Activated T-helper 1 cell treated with anti-CD3 and anti-CD28 coated beads, Interleukin-12 subunit alpha, Interleukin-12 subunit beta, Interleukin-2, Interleukin-4 antibody, amounts not matched to agents 30 ng/mL and 10 ng/mL and 1 ng/mL, durations not matched to agents 14 hours and 24 hours and 36 hours (primary cell): ENCODE measurements at regions of chr3 and their contacts with region 1.

Region 1: DNA sequence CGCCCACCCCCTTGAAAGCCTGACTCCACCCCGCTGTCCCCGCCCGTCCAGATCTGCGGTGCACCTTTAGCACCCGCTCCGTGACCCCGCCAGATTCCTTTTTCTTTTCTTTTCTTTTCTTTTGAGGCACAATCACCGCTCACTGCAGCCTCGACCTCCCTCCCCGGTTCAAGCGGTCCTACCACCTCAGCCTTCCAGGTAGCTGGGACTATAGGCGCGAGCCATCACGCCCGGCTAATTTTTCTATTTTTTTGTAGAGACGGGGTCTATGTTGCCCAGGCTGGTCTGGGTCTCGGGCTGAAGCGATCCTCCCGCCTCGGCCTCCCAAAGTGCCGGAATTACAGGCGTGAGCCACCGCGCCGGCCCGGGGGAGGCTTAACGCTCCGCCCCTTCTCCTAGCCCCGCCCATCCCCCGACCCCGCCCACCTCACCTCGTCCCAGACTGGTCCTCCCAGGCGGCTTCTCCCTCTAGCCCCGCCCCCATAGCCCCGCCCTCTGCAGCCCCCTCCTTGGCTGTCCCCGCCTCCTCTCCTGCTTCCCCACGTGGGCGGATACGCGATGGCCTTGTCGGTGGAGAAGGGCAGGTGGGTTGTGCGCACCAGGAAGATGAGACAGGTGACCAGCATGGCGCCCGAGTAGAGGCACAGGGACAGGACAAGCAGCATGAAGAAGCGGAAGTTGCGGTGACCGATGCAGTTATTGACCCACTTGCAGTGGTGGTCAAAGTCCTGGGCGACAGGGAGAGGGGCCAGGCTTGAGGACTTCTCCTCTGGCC is 3.2 kb downstream of the ZDHHC19 start:
- DNase-seq: no peak
- H3K4me3 Mint-ChIP-seq: peak overlapping the region; percentile 80
- H3K27ac Mint-ChIP-seq: peak overlapping the region; percentile 69
- H3K4me1 Mint-ChIP-seq: peaks cover 4% of the 10 kb centered on the region
- H3K27me3 Mint-ChIP-seq: peaks cover 14% of the 10 kb centered on the region

Region 2: DNA sequence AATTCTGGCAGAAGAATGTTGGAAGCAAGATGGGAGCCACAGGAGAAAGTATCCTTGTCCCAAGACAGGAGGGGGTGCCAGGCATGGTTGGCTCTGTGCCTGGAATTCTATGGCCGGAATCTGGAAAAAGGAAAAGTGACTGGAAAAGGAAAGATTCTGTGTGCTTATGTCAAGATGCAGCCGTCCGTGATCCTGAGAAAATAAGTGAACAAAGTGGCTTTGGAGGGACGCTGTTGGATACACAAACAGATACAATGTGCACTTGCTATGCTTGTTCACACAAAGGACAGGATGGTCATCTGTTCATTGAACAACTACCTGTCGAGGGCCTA is 515.7 kb before region 1 on chr3:
- intact Hi-C with region 1: loop called (anchors 10 kb)
- DNase-seq: no peak
- H3K4me3 Mint-ChIP-seq: peak overlapping the region; percentile 56
- H3K27ac Mint-ChIP-seq: peak overlapping the region; percentile 94
- H3K4me1 Mint-ChIP-seq: peaks cover 37% of the 10 kb centered on the region
- H3K27me3 Mint-ChIP-seq: no peaks in the 10 kb centered on the region

Region 3: GRCh38 chr3:195956571-195956970 is 251.4 kb before region 1 on chr3:
- intact Hi-C with region 1: loop called (anchors 5 kb)
- DNase-seq: no peak
- H3K4me3 Mint-ChIP-seq: no peak overlapping the region
- H3K27ac Mint-ChIP-seq: peak overlapping the region; percentile 96
- H3K4me1 Mint-ChIP-seq: peaks cover 44% of the 10 kb centered on the region
- H3K27me3 Mint-ChIP-seq: no peaks in the 10 kb centered on the region